Panc1 (cell line): ENCODE measurements at regions of chr7 and their contacts with region 1.

Region 1: GRCh38 chr7:123580406-123581161 is 21.0 kb upstream of the ASB15 start:
- DNase-seq: peak; percentile 38
- ATAC-seq: peak; percentile 79
- H3K4me3 ChIP-seq: no peak overlapping the region
- H3K27ac ChIP-seq: no peak overlapping the region
- H3K4me1 ChIP-seq: no peaks in the 10 kb centered on the region; the same call in 1 of the 2 replicates
- H3K27me3 ChIP-seq: peaks cover 8% of the 10 kb centered on the region; the same call in 1 of the 2 replicates
- CTCF ChIP-seq: peak; percentile 80

Region 2: GRCh38 chr7:123220396-123220795 is 360.2 kb before region 1 on chr7:
- CTCF ChIA-PET with region 1: no interaction called
- POLR2A ChIA-PET with region 1: no interaction called
- in situ Hi-C with region 1: no loop called
- intact Hi-C with region 1: no loop called
- DNase-seq: no peak
- ATAC-seq: no peak
- H3K4me3 ChIP-seq: no peak overlapping the region
- H3K27ac ChIP-seq: no peak overlapping the region
- H3K4me1 ChIP-seq: no peaks in the 10 kb centered on the region
- H3K27me3 ChIP-seq: no peaks in the 10 kb centered on the region
- CTCF ChIP-seq: no peak

Region 3: GRCh38 chr7:123505221-123505620 is 75.4 kb before region 1 on chr7:
- CTCF ChIA-PET with region 1: no interaction called
- POLR2A ChIA-PET with region 1: no interaction called
- in situ Hi-C with region 1: no loop called
- intact Hi-C with region 1: no loop called
- DNase-seq: no peak
- ATAC-seq: no peak
- H3K4me3 ChIP-seq: no peak overlapping the region
- H3K27ac ChIP-seq: no peak overlapping the region
- H3K4me1 ChIP-seq: no peaks in the 10 kb centered on the region
- H3K27me3 ChIP-seq: no peaks in the 10 kb centered on the region
- CTCF ChIP-seq: no peak

Region 4: DNA sequence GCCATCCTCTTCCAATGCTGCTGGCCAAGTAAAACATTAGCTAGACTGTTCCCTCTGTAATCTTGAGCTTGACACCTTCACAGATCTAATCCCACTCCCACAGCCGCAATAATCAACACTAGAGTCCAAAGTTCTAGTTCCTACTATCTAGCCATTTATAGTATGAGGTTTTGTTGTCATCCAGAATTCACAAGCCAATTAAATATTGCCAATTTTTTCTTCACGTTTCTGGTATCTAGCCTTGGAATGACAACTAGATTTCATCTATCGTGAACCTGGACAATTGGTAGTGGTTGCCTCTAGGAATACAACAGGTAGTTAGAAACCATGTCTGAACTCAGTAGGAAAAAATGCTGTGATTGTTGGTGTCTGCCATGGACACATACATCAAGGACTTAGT is 157.8 kb after region 1 on chr7:
- CTCF ChIA-PET with region 1: no interaction called
- POLR2A ChIA-PET with region 1: interaction called, 13 read pairs
- in situ Hi-C with region 1: no loop called
- intact Hi-C with region 1: no loop called
- DNase-seq: no peak
- ATAC-seq: no peak
- H3K4me3 ChIP-seq: no peak overlapping the region
- H3K27ac ChIP-seq: no peak overlapping the region
- H3K4me1 ChIP-seq: no peaks in the 10 kb centered on the region
- H3K27me3 ChIP-seq: no peaks in the 10 kb centered on the region
- CTCF ChIP-seq: no peak

Region 5: DNA sequence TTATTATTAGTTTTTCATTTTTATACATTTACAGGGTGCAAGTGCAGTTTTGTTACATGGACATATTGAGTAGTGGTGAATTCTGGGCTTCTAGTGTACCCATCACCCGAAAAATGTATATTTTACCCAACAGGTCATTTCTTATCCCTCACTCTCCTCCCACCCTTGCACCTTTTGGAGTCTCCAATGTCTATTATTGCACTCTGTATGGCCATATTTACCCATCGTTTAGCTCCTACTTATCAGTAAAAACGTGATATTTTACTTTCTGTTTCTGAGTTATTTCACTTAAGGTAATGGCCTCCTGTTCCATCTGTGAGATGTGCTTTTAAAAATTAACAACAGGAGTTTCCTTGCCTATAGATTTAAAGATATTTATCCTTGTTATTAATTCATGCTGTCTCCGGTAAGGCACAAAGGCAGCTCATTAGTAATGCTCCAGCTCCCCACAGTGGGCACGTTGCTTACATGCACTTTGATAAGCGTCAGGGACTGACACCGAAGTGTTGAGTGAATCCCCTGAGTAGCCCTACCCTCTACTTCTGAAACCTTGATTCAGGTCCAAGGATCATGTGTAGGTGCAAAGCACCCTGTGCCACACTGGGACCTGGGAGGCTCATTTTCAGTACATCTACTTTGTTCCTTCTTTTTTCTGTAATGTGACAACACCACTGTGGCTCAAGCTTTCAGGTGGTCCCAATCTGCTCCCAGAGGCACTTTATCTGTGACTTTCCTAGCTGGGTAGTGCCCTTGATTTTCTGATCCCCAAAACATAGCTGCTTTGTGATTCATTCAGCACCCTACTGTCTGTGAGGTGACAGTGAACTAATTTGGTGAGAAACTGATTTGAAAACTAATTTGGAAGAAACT is 291.6 kb after region 1 on chr7:
- CTCF ChIA-PET with region 1: no interaction called
- POLR2A ChIA-PET with region 1: no interaction called
- in situ Hi-C with region 1: no loop called
- intact Hi-C with region 1: loop called (anchors 5 kb)
- DNase-seq: peak; percentile 55
- ATAC-seq: peak; percentile 94
- H3K4me3 ChIP-seq: no peak overlapping the region
- H3K27ac ChIP-seq: no peak overlapping the region
- H3K4me1 ChIP-seq: no peaks in the 10 kb centered on the region
- H3K27me3 ChIP-seq: peaks cover 10% of the 10 kb centered on the region; the same call in 1 of the 2 replicates
- CTCF ChIP-seq: peak; percentile 69

Region 6: DNA sequence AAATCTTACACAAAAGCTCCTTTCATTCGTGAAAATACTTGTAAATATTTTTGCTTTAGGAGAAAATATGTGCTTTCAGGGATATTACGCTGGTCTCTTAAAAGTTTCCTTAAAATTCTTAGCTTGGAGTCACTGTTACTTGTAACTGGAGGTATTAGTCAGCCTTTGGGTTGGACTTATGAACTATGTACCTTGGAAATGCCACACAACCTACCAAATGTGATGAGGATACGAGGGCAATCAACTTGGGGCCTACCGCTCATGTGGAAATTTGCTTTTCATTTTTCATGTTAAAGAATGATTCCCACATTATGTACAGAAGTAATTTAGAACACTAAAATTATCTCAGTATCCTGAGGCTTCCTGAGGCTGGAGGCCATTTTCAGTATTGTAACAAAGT is 367.6 kb after region 1 on chr7:
- CTCF ChIA-PET with region 1: no interaction called
- POLR2A ChIA-PET with region 1: no interaction called
- in situ Hi-C with region 1: no loop called
- intact Hi-C with region 1: no loop called
- DNase-seq: no peak
- ATAC-seq: no peak
- H3K4me3 ChIP-seq: no peak overlapping the region
- H3K27ac ChIP-seq: no peak overlapping the region
- H3K4me1 ChIP-seq: no peaks in the 10 kb centered on the region
- H3K27me3 ChIP-seq: no peaks in the 10 kb centered on the region
- CTCF ChIP-seq: no peak